Motor neuron (in vitro differentiated cells): ENCODE measurements at regions of chr17 and their contacts with region 1.

Region 1: DNA sequence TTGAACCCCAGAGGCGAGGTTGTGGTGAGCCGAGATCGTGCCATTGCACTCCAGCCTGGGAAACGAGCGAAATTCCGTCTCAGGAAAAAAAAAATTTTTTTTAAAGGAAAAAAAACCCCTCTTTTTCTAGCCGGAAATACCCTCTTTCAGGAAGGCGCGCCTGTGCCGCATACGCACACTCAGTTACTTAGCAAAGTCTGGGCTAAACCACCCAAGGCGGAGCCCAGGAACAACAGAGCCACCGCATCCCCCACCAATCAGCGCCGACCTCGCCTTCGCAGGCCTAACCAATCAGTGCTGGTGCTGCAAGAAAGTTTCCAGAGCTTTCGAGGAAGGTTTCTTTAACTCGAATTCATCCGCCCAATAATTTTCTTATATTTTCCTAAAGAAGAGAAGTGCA is 510.4 kb downstream of the KCNJ18 start:
- ATAC-seq: no peak
- H3K4me3 ChIP-seq: no peak overlapping the region
- H3K27ac ChIP-seq: no peak overlapping the region
- H3K4me1 ChIP-seq: no peaks in the 10 kb centered on the region

Region 2: DNA sequence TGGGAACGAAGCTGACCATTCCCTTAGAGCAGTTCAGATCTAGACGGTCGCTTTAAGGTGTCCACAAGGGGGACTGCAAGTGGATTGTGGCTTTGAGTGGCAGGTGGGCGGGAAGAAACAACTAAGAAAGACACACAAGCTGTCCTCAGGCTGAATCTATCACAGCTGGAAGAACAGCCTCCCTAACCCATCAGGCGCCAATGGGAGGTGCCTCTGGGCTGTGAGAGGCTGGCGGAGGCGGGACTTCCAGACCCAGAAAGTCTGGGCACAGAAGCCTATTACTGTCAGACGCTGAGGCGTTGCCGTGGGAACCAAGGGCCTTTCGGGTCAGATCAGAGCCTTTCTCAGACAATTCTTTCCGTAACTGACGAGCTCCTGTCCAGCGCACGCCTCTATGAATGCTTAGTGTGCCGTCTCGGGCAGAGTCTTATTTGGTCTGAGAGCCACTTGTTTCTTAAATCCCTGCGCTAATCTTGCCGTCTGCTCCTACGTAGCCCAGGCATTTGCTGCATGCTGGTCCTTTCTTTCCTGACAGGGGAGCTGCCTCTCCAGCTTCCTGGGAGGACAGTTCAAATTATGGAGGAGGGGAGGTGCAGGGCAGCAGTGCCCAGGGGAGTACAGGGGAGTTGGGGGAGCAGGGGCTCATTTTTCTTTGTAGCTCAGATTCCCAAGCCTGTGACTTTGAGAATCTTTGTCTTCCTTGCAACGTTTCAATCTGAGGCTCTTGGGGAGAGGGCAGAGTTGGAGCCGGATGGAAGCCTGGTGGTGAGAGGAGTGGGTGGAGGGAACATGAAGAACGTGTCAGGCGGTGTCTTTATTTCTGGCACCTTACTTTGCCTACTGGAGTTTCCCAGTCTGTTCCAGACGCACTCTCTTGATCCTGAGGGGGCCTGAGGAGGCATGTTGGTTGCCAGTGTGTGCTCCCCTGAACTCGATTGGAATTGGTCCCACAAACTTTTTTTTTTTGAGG is 108.3 kb after region 1 on chr17:
- in situ Hi-C with region 1: loop called in 2 of 9 experiments (anchors 25 kb)
- ATAC-seq: peak in 5 of 8 experiments; percentile 29 to 74 (median 67)
- H3K4me3 ChIP-seq: peak overlapping the region in 3 of 5 donors; percentile 2 to 13 (median 12)
- H3K27ac ChIP-seq: no peak overlapping the region
- H3K4me1 ChIP-seq: peaks cover 0 to 6% of the 10 kb centered on the region in 2 donors